ENCODE measurements at regions of chr19 and their contacts with region 1.

Region 1: GRCh38 chr19:18940769-18941407 is at the start of gene HOMER3:
- DNase-seq: peak in 1 of 2 donors; percentile 87
- H3K4me3 ChIP-seq: peak within 1 kb of the TSS; percentile 57 to 80
- H3K27ac ChIP-seq: peak within 1 kb of the TSS; percentile 51 to 73
- H3K4me1 ChIP-seq: peaks cover 0 to 7% of the 10 kb centered on the region in 2 donors
- H3K27me3 ChIP-seq: no peaks in the 10 kb centered on the region
- CTCF ChIP-seq: peak; percentile 11 to 52 (median 27)
- total RNA-seq, gene HOMER3: 93.0 TPM

Region 2: DNA sequence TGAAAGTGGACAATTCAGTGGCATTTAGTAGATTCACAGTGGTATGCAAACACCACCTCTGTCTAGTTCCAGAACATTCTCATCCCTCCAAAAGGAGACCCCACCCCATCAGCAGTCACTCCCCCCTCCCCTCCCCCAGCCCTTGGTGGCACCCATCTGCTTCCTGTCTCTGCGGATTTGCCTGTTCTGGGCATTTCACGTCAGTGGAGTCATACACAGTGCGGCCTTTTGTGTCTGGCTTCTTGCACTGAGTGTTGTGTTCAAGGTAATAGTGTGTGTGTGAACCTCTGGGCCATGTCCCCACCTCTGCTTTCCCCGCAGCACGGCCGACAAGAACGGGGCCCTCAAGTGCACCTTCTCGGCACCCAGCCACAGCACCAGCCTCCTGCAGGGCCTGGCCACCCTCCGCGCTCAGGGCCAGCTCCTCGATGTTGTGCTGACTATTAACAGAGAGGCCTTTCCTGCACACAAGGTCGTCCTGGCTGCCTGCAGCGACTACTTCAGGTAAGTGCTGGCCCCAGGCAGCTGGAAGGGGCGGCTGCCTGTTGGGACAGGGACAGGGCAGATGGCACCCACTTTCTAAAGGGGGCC is 276.9 kb before region 1 on chr19:
- intact Hi-C with region 1: no loop called
- DNase-seq: no peak
- H3K4me3 ChIP-seq: no peak overlapping the region
- H3K27ac ChIP-seq: peak overlapping the region; percentile 94 to 95
- H3K4me1 ChIP-seq: peaks cover 23 to 56% of the 10 kb centered on the region in 2 donors
- H3K27me3 ChIP-seq: no peaks in the 10 kb centered on the region
- CTCF ChIP-seq: no peak

Region 3: GRCh38 chr19:18809150-18809868 is 131.6 kb before region 1 on chr19:
- intact Hi-C with region 1: no loop called
- DNase-seq: peak; percentile 38 to 91
- H3K4me3 ChIP-seq: no peak overlapping the region
- H3K27ac ChIP-seq: peak overlapping the region; percentile 53 to 61
- H3K4me1 ChIP-seq: peaks cover 3 to 15% of the 10 kb centered on the region in 2 donors
- H3K27me3 ChIP-seq: no peaks in the 10 kb centered on the region
- CTCF ChIP-seq: no peak

Region 4: DNA sequence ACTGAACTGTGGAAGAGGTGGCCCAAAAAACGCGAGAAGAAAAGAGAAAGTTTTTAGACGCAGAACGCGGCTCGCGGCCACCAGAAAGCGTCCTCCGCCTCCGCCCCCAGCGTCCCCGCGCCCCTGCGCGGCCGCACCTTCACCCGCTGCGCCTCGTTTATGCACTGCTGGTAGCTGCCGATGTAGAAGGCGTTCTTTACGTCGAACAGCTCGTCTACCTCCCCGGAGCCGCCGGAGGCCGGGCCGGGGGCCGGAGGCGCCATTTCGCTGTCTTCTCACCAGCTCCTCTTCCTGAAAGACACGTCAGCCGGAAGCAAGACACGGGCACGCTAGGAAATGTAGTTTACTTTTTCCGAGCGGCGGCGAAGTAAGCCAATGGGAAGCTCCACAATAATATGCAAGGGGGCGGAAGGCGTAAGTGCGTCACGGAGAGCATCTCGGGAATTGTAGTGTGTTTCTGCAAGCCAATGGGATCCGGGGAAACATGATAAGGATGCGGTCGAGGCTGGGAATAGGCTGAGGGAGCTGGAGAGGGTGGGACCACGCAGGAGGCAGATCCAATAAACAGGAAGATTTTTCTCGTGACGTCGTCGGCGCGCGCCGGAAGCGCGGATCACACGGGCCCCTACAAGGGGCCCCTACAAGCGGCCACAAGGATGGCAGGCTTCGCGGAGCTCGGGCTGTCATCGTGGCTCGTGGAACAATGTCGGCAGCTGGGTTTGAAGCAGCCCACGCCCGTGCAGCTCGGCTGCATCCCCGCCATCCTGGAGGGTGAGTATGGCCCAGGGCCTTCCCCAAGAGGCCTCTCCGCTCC is 21.6 kb before region 1 on chr19 and contains the starts of genes COPE and DDX49:
- intact Hi-C with region 1: loop called (anchors 1 kb)
- DNase-seq: peak; percentile 98 to 100
- H3K4me3 ChIP-seq: peak within 1 kb of the TSS; percentile 88 to 98
- H3K27ac ChIP-seq: peak within 1 kb of the TSS; percentile 91 to 97
- H3K4me1 ChIP-seq: peaks cover 6 to 22% of the 10 kb centered on the region in 2 donors
- H3K27me3 ChIP-seq: no peaks in the 10 kb centered on the region
- CTCF ChIP-seq: no peak
- total RNA-seq, gene COPE: 331 TPM
- total RNA-seq, gene DDX49: 51.6 TPM

Region 5: GRCh38 chr19:18985257-18985656 is 44.4 kb after region 1 on chr19:
- intact Hi-C with region 1: loop called (anchors 5 kb)
- DNase-seq: no peak
- H3K4me3 ChIP-seq: no peak overlapping the region
- H3K27ac ChIP-seq: no peak overlapping the region
- H3K4me1 ChIP-seq: no peaks in the 10 kb centered on the region
- H3K27me3 ChIP-seq: no peaks in the 10 kb centered on the region
- CTCF ChIP-seq: no peak